ENCODE measurements at regions of chr5 and their contacts with region 1.

Region 1: GRCh38 chr5:21723500-21723899 is 1129.6 kb downstream of the CDH12 start:
- DNase-seq: no peak
- H3K4me3 ChIP-seq: no peak overlapping the region
- H3K27ac ChIP-seq: no peak overlapping the region
- H3K4me1 ChIP-seq: no peaks in the 10 kb centered on the region
- H3K27me3 ChIP-seq: no peaks in the 10 kb centered on the region
- CTCF ChIP-seq: no peak

Region 2: GRCh38 chr5:20678814-20679298 is 1044.6 kb before region 1 on chr5:
- CTCF ChIA-PET with region 1: no interaction called
- POLR2A ChIA-PET with region 1: no interaction called
- intact Hi-C with region 1: no loop called
- DNase-seq: peak; percentile 23 to 68
- H3K4me3 ChIP-seq: no peak overlapping the region
- H3K27ac ChIP-seq: peak overlapping the region; percentile 93
- H3K4me1 ChIP-seq: peaks cover 14% of the 10 kb centered on the region
- H3K27me3 ChIP-seq: no peaks in the 10 kb centered on the region
- CTCF ChIP-seq: no peak

Region 3: DNA sequence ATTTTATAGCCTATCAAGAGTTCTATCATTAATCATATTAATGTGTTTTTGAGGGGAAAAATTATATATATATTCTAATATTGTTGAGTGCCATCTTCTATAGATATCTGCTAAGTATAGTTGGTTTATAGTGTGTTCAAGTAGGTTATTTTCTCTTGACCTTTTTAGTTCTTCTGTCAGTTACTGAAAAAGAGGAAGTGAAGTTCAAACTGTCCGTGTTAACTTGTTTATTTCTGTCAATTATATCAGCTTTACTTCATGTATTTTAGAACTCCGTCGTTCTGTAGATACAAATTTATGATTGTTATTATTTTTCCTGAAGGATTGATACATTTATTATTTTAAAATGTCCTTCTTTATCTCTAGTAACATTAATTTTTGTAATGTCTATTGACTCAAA is 79.5 kb before region 1 on chr5:
- CTCF ChIA-PET with region 1: interaction called, 12 read pairs
- POLR2A ChIA-PET with region 1: no interaction called
- intact Hi-C with region 1: no loop called
- DNase-seq: no peak
- H3K4me3 ChIP-seq: no peak overlapping the region
- H3K27ac ChIP-seq: no peak overlapping the region
- H3K4me1 ChIP-seq: no peaks in the 10 kb centered on the region
- H3K27me3 ChIP-seq: no peaks in the 10 kb centered on the region
- CTCF ChIP-seq: no peak